ENCODE measurements at regions of chr9 and their contacts with region 1.

Region 1: DNA sequence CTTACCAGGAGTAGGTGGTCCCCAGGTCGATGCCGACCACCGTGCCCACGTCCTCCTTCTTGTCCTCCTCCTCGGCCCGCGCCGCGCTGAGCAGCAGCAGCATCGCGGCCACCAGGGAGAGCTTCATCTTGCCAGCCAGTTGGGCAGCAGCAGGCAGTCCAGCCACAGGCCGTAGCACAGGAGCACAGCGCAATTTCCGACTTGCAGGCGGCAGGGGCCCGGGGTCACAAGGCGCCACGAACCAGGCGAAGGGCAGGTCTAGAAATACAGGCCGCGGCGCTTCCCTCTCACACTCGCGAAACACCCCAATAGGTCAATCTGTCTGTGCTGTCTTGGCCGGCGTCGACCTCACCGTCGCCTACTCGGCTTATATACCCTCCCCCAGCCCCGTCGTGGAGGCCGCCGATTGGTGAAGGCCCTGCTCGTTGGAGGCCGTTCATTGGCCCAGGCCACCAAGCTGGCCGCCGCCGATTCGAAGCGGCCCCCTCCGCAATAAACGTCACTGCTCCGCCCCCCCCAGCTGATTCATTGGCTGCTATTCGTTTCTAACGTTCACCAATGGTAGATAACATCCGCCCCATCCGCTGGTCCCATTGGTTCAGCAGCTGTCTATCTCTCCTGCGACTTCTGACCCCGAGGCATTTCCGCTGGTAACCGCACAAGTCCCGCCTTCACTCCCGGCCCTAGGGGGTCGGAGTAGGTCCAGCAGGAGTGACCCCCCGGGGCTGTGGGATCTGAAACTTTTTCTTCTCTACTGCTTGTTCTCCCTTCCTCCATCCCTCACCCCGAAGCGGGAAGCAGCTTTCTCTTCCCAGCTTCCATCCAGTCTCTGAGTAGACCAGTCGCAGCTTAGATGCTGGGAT is at the start of gene HSPA5:
- DNase-seq: peak; percentile 100
- ATAC-seq: peak; percentile 94
- H3K4me3 Mint-ChIP-seq: peak within 1 kb of the TSS; percentile 98
- H3K27ac Mint-ChIP-seq: peak within 1 kb of the TSS; percentile 100
- H3K4me1 Mint-ChIP-seq: peaks cover 30% of the 10 kb centered on the region
- H3K27me3 Mint-ChIP-seq: peaks cover 2% of the 10 kb centered on the region; the same call in 1 of the 2 replicates
- CTCF ChIP-seq: no peak
- total RNA-seq, gene HSPA5: 224 to 357 TPM (median 224 TPM) in 3 replicates

Region 2: GRCh38 chr9:125200210-125201047 is 40.8 kb before region 1 on chr9 and contains the start of gene RABEPK:
- CTCF ChIA-PET with region 1: no interaction called
- POLR2A ChIA-PET with region 1: interaction called, 16 read pairs
- DNase-seq: peak; percentile 97
- ATAC-seq: peak; percentile 99
- H3K4me3 Mint-ChIP-seq: peak within 1 kb of the TSS; percentile 82
- H3K27ac Mint-ChIP-seq: peak within 1 kb of the TSS; percentile 86
- H3K4me1 Mint-ChIP-seq: peaks cover 6% of the 10 kb centered on the region
- H3K27me3 Mint-ChIP-seq: peaks cover 3% of the 10 kb centered on the region; the same call in 1 of the 2 replicates
- CTCF ChIP-seq: no peak
- total RNA-seq, gene RABEPK: 23.4 to 25.5 TPM (median 23.7 TPM) in 3 replicates

Region 3: GRCh38 chr9:125255781-125256391 is 14.7 kb after region 1 on chr9:
- CTCF ChIA-PET with region 1: interaction called, 14 read pairs
- POLR2A ChIA-PET with region 1: interaction called, 13 read pairs
- DNase-seq: peak; percentile 32
- ATAC-seq: peak; percentile 76
- H3K4me3 Mint-ChIP-seq: no peak overlapping the region
- H3K27ac Mint-ChIP-seq: no peak overlapping the region
- H3K4me1 Mint-ChIP-seq: peaks cover 2% of the 10 kb centered on the region; the same call in 1 of the 2 replicates
- H3K27me3 Mint-ChIP-seq: no peaks in the 10 kb centered on the region
- CTCF ChIP-seq: no peak

Region 4: DNA sequence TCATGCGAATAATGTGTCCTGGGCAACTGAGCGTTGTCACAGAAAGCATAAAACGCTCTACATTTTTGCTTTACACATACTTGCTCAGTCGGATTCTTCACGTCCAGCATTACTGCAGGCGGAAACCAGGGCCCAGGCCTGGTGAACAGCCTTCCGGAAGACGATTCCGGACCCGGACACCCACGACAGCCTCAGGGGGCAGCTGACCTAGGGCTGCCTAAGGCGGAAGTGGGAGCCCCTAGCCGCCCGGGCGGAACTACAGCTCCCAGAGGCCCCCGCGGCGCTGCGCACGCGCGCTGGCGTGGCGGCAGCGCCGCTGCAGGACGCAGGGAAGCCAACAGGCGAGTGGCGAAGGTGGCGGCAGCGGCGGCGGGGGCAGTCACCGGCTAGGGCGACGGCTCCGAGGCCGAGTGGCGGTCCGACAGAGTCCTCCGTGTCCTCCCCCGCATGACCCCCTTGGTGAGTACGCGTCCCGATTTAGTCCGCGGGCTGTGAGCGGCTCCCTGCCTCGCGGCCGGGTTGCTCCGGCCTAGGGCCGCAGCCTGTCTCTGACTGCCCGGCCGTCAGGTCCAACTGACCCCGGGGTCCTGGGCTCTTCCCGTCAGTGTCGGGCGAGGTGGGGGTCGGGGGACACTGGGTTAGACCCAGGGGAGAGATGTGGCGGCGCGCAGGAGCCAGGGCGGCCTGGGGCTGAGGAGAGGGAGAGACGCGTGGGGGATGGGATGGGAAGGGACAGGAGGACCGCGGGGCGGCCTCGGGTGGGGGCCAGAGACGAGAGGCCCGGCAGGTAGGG is 20.5 kb after region 1 on chr9 and contains the start of gene GAPVD1:
- CTCF ChIA-PET with region 1: interaction called, 14 read pairs
- POLR2A ChIA-PET with region 1: interaction called, 13 read pairs
- DNase-seq: peak; percentile 92
- ATAC-seq: peak; percentile 97
- H3K4me3 Mint-ChIP-seq: peak within 1 kb of the TSS; percentile 98
- H3K27ac Mint-ChIP-seq: peak within 1 kb of the TSS; percentile 80
- H3K4me1 Mint-ChIP-seq: peaks cover 10% of the 10 kb centered on the region
- H3K27me3 Mint-ChIP-seq: no peaks in the 10 kb centered on the region
- CTCF ChIP-seq: no peak
- total RNA-seq, gene GAPVD1: 33.3 to 34.0 TPM (median 33.8 TPM) in 3 replicates

Region 5: DNA sequence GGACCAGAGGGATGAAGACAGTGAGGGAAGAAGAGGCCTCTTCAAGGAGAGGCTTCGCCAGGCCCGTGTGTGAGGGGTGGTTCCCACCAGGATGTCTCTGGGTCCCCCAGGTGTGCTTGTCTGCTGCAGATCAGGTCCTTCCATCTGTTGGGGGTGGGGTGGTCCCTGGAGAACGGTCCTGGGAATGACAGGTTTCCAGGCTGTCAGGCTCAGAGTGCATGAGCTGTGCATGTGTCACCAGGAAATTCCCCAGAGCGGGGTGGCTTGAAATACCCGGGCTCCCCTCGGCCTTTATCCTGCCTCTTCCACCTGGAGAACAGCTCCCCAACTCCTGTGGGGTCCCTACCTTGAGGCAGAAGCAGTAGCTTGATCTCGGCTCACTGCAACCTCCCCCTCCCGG is 139.2 kb after region 1 on chr9:
- CTCF ChIA-PET with region 1: no interaction called
- POLR2A ChIA-PET with region 1: no interaction called
- DNase-seq: no peak
- ATAC-seq: no peak
- H3K4me3 Mint-ChIP-seq: no peak overlapping the region
- H3K27ac Mint-ChIP-seq: no peak overlapping the region
- H3K4me1 Mint-ChIP-seq: peaks cover 7% of the 10 kb centered on the region
- H3K27me3 Mint-ChIP-seq: peaks cover 3% of the 10 kb centered on the region; the same call in 1 of the 2 replicates
- CTCF ChIP-seq: no peak

Measured in WTC11 (cell line).